ENCODE measurements at regions of chr11 and their contacts with region 1.

Region 1: DNA sequence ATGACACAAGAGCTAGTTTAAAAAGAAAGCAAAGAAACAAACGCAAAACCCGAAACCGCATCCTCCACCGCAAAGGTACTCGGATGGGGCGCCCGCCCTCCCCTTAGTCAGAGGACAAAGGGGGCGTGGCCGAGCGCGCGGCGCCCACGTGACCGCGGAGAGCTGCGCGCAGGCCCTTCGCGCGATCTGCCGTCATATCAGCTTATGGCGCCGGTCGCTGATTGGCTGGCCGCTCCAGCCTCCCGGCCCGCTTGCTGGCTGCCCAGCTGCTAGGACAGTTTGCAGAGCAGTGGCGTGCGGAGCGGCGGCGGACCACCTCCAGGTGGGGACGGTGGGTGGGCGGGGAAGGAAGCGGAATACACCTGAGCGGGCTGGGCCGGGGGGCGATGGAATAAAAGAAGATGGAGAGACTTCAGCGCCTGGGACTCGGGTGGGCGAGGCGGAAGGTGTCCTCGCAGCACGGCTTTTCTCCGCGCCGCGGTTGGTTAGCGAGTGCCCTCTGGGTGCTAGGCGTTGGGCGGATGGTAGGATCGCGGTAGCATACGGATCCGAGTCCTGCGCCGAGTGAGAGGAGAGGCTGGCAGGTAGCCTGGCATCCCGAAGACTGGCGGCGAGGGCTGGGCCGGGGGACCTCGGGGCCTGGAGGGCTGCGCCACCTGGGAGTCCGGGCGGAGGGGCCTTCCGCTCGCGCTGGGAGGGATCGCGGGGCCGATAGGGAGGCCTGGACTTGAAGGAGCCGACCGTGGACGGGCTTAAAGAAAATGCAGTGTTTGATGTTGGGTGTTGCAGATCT is at the start of gene SC5D:
- DNase-seq: peak; percentile 90 to 99 (median 96)

Region 2: DNA sequence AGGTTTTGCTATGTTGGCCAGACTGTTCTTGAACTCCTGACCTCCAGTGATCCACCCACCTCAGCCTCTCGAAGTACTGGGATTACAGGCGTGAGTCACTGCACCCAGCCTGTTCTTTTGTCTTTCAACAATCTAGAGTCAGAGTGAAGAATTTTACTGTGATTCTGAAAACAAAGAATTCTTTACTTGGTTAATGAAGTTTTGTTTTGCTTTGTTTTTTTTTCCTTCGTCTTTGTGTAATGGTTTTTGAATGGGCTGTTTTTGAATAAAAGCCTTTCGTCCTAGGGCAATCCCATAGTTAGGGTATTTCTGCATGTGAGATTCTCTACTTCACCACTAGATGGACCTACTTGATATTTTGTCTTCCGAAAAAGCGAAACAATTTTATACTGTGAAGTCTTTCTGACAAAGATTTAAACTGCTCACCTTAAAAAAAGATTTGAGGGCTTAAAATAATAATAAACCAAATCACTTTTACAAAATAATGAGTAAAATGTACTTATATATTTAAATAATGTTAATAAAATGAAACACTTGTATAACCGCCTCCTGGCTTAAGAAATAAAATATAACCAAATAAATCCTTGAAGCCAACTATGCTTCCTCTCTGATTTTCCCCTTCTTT is 43.5 kb before region 1 on chr11:
- intact Hi-C with region 1: loop called (anchors 2 kb)
- DNase-seq: no peak

Region 3: DNA sequence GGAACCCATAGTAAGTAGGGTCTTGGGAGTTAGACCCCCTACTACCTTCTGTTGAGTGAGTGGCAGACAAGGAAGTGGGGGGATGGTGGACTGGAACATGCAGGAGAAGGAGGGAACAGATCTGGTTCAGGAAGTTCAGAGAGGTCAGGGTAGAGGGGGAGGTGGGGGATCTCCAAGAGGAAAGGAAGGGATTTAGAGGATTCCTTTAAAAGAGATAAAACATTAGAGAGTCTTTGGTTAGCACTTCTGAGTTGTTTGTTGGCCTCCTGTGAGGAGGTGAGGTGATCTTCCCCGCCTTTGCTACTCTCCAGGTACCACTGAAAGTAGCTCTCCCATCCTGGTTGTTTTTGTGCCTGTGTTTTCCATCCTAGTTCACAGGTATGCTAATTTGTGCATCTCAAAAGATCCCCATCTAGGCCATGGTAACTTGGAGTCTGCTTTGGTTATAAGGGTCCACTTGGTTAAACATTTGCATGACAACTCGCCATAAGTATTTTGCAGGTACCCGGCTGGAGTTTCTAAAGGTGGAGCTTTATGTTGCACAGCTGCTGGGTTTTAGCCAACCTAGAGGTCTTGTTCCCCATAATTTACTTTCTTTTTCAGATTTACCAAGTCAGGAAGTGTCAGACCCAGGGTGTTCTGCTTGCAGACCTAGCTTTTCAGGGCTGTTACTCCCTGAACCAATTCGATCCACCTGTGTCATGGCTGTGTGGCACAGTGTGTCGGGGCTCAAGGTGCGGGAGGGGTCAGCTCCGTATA is 80.2 kb after region 1 on chr11:
- intact Hi-C with region 1: no loop called
- DNase-seq: no peak